Activated naive CD4-positive, alpha-beta T cell treated with anti-CD3 and anti-CD28 coated beads for 36 hours (primary cell): ENCODE measurements at regions of chr2 and their contacts with region 1.

Region 1: DNA sequence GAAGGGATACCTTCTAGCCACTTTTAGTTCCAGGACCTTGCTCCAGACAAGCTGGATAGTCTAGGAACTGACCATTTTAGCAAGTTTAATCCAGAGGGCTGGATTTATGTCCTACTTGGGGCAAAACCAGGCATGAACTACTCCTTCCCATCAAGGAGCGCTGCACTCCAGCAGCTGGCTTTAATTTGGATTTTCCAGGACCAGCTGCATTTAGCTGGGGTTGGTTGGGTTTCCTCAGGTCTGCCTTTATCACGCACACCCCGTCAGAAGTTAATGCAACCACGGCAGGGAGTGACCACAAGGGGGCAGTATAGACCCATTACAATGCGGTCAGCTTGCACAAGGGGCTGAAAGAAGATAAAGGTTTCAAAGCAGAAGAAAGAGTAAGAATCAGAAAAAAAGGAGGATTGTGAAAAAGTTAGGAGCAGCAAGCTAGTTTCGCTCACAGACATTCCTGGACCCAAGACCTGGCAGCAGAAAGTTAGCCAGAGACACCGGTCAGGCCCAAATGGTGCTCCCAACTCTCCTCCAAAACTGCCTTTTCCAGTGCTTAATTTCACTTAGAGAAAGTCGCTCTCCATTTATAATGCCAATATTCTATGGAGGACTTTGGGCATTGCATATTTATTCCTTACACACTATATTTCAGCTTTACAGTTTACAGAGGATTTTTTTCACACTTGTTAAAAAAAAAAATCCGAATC is 40.1 kb downstream of the SLC4A1AP start:
- DNase-seq: peak; percentile 95
- H3K4me3 Mint-ChIP-seq: no peak overlapping the region
- H3K27ac Mint-ChIP-seq: no peak overlapping the region
- H3K4me1 Mint-ChIP-seq: peaks cover 13% of the 10 kb centered on the region
- H3K27me3 Mint-ChIP-seq: no peaks in the 10 kb centered on the region

Region 2: GRCh38 chr2:27461118-27461517 is 242.7 kb before region 1 on chr2:
- CTCF ChIA-PET with region 1: no interaction called
- intact Hi-C with region 1: no loop called
- DNase-seq: no peak
- H3K4me3 Mint-ChIP-seq: no peak overlapping the region
- H3K27ac Mint-ChIP-seq: no peak overlapping the region
- H3K4me1 Mint-ChIP-seq: no peaks in the 10 kb centered on the region
- H3K27me3 Mint-ChIP-seq: no peaks in the 10 kb centered on the region

Region 3: DNA sequence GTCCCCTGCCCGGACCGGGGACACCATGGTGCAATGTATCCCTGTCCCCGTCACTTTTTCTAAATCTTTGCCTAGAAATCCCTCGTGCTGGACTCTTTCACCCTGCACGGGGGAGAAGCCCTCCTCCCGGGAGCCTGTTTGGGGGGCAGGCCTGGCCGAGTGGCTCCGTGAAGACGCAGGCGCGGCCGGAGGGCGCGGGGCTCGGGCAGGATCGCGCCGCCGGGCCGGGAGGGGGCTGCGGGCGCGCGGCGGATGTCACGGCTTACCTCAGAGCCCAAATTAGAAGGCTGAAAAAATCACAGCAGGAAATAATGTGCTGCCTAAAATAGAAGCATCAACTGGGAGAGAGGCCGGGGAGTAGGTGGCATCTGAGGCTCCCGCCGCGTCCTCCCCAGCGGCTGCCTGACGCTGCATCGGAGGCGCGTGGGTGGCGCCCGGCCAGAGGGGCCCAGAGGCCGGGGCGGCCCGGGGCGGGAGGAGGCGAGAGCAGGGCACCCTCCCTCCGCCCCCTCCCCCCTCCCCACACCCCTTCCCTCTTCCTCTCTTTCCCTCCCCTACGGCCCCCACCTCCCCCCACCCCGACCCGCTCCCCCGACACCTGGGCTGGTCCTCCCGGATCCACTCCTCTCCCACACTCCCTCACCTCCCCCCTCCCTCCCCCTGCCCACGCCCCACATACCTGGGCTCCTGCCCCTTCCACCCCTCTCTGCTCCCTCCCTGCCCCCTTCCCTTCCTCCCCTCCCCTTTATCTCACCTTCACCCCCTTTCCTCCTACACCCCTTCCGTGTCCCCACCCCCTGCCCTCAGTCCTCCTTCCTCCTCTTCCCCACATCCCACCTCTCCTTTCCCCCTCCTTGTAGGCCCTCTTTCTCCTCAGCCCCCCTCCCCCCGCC is 11.8 kb after region 1 on chr2:
- CTCF ChIA-PET with region 1: interaction called, 15 read pairs
- intact Hi-C with region 1: loop called (anchors 1 kb)
- DNase-seq: peak; percentile 67
- H3K4me3 Mint-ChIP-seq: peak overlapping the region; percentile 32
- H3K27ac Mint-ChIP-seq: no peak overlapping the region
- H3K4me1 Mint-ChIP-seq: peaks cover 43% of the 10 kb centered on the region
- H3K27me3 Mint-ChIP-seq: peaks cover 11% of the 10 kb centered on the region

Region 4: GRCh38 chr2:27723372-27724144 is 19.8 kb after region 1 on chr2:
- CTCF ChIA-PET with region 1: interaction called, 17 read pairs
- intact Hi-C with region 1: loop called (anchors 1 kb)
- DNase-seq: peak; percentile 53
- H3K4me3 Mint-ChIP-seq: no peak overlapping the region
- H3K27ac Mint-ChIP-seq: no peak overlapping the region
- H3K4me1 Mint-ChIP-seq: peaks cover 24% of the 10 kb centered on the region
- H3K27me3 Mint-ChIP-seq: no peaks in the 10 kb centered on the region

Region 5: GRCh38 chr2:27754138-27754588 is 50.4 kb after region 1 on chr2:
- CTCF ChIA-PET with region 1: interaction called, 4 read pairs
- intact Hi-C with region 1: loop called (anchors 1 kb)
- DNase-seq: peak; percentile 92
- H3K4me3 Mint-ChIP-seq: no peak overlapping the region
- H3K27ac Mint-ChIP-seq: no peak overlapping the region
- H3K4me1 Mint-ChIP-seq: no peaks in the 10 kb centered on the region
- H3K27me3 Mint-ChIP-seq: peaks cover 2% of the 10 kb centered on the region

Region 6: DNA sequence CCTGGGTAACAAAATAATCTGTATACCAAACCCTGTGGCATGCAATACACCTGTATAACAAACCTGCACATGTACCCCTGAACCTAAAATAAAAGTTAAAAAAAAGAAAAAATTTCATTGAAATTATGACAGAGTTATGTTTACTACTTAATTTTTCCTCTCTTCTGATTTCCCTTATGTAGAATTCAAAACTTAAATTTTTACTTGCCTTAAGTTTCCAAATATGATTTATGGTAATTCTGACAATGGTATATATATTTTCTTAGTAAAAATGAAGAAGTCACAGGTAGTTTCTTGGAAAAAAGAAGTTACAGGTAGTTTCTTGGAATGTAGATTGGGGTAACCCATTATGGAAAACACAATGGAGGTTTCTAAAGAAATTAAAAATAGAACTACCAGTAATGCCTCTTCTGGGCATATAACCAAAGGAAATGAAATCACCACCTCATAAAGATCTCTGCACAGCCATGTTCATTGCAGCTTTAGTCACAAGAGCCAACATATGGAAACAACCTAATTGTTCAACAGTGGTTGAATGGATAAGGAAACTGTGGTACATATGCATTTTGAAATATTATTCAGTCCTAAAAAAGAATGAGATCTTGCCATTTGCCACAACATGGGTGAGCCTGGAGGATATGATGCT is 351.7 kb after region 1 on chr2:
- CTCF ChIA-PET with region 1: no interaction called
- intact Hi-C with region 1: no loop called
- DNase-seq: no peak
- H3K4me3 Mint-ChIP-seq: no peak overlapping the region
- H3K27ac Mint-ChIP-seq: no peak overlapping the region
- H3K4me1 Mint-ChIP-seq: peaks cover 6% of the 10 kb centered on the region
- H3K27me3 Mint-ChIP-seq: no peaks in the 10 kb centered on the region